Activated B cell treated with CpG ODN at 0.5 μM for 24 hours (primary cell): ENCODE measurements at regions of chr19 and their contacts with region 1.

Region 1: GRCh38 chr19:58400916-58401839 is 5.7 kb downstream of the RNF225 start:
- DNase-seq: peak; percentile 96
- ATAC-seq: peak; percentile 96
- H3K4me3 Mint-ChIP-seq: peak overlapping the region; percentile 92
- H3K27ac Mint-ChIP-seq: peak overlapping the region; percentile 90
- H3K4me1 Mint-ChIP-seq: peaks cover 12% of the 10 kb centered on the region
- H3K27me3 Mint-ChIP-seq: peaks cover 7% of the 10 kb centered on the region
- CTCF ChIP-seq: no peak

Region 2: GRCh38 chr19:57682226-57682766 is 718.9 kb before region 1 on chr19:
- CTCF ChIA-PET with region 1: no interaction called
- POLR2A ChIA-PET with region 1: no interaction called
- intact Hi-C with region 1: loop called (anchors 1 kb)
- DNase-seq: no peak
- ATAC-seq: no peak
- H3K4me3 Mint-ChIP-seq: peak overlapping the region; percentile 98
- H3K27ac Mint-ChIP-seq: peak overlapping the region; percentile 90
- H3K4me1 Mint-ChIP-seq: peaks cover 39% of the 10 kb centered on the region
- H3K27me3 Mint-ChIP-seq: peaks cover 8% of the 10 kb centered on the region
- CTCF ChIP-seq: no peak

Region 3: GRCh38 chr19:58305065-58305931 is 95.9 kb before region 1 on chr19 and contains the start of gene ERVK3-1:
- CTCF ChIA-PET with region 1: no interaction called
- POLR2A ChIA-PET with region 1: no interaction called
- intact Hi-C with region 1: loop called (anchors 1 kb)
- DNase-seq: peak; percentile 89
- ATAC-seq: peak; percentile 97
- H3K4me3 Mint-ChIP-seq: peak within 1 kb of the TSS; percentile 100
- H3K27ac Mint-ChIP-seq: peak within 1 kb of the TSS; percentile 98
- H3K4me1 Mint-ChIP-seq: peaks cover 38% of the 10 kb centered on the region
- H3K27me3 Mint-ChIP-seq: no peaks in the 10 kb centered on the region
- CTCF ChIP-seq: no peak
- total RNA-seq, gene ERVK3-1: 61.4 and 74.3 TPM in 2 replicates

Region 4: DNA sequence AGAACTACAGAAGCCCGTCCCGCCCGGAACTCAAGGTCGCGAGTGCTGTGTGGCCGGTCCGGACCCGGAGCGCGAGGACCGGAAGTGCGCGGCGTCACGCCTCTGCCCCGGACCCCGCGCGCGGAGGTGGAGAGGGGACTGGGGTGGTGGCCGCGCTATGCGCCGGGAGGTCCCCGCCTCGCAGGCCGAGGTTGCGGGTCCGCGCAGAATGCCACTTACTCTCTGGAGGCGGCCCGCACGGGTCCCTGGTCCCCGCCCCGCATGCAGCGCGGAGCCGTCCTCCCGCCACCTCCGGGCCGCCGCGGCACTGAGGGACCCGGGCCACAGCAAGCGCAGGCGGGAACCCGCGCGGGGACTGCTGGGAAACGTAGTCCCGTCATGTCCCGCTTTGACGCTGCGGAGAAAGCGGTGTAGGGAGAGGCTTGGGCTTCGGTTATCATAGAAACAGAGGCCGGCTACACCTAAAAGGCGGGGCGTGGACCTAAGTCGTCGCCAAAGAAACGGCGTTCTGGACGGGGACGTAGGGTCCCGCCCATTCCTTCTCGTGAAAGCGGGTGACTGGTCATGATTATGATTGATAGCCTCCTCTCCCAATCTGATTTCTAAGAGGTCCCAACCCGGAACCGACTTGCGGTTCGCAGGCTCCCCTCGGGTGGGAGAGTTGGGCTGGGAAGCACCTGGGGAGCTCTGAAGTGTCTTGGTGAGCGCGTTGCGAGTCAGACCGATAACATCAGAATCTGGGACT is 20.3 kb before region 1 on chr19 and contains the start of gene ZNF837:
- CTCF ChIA-PET with region 1: no interaction called
- POLR2A ChIA-PET with region 1: interaction called, 10 read pairs
- intact Hi-C with region 1: loop called (anchors 1 kb)
- DNase-seq: peak; percentile 96
- ATAC-seq: peak; percentile 86
- H3K4me3 Mint-ChIP-seq: peak within 1 kb of the TSS; percentile 83
- H3K27ac Mint-ChIP-seq: peak within 1 kb of the TSS; percentile 87
- H3K4me1 Mint-ChIP-seq: peaks cover 37% of the 10 kb centered on the region
- H3K27me3 Mint-ChIP-seq: no peaks in the 10 kb centered on the region
- CTCF ChIP-seq: no peak
- total RNA-seq, gene ZNF837: 3.1 and 3.5 TPM in 2 replicates

Region 5: DNA sequence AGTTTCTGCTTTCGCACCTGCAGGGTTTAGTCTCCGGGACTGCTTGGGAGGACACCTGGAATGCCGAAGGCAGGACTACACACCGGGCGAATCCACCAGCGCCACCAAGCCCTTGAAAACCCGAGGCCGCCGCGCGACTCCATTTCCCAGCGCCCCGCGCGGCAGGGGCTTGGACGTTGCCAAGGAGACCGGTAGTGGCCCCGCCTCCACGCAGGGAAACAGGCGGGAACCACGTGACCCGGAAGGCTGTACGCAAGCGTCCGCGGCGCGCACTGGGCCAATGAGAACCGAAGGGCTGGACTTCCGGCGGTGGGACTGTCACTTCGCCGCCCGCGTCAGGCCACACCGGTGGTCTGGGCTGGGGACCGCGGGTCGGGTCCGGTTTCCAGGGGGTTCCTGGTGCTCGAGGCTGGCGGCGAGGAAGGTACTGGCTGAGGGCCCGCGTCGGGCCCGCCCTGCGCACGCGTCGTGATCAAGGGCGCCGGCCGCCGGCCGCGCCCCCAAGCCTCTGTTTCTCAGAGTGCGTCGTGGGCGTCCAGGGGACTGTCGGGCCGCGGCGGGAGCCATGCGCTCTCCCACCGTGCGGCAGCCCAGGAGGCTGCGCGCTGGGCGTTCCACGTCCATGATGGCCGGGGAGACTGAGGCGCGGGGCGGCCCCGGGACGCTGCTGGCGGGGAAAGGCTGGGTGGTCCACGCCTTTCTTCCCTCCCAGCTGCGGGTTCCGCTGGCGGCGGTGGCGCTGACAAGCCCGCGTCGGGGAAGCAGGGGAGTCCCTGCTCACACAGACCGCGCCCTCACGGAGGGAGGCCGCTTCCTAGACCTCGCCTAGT is 65.8 kb after region 1 on chr19 and contains the start of gene ZNF324:
- CTCF ChIA-PET with region 1: no interaction called
- POLR2A ChIA-PET with region 1: no interaction called
- intact Hi-C with region 1: loop called (anchors 2 kb)
- DNase-seq: peak; percentile 95
- ATAC-seq: peak; percentile 92
- H3K4me3 Mint-ChIP-seq: peak within 1 kb of the TSS; percentile 81
- H3K27ac Mint-ChIP-seq: peak within 1 kb of the TSS; percentile 56
- H3K4me1 Mint-ChIP-seq: peaks cover 26% of the 10 kb centered on the region
- H3K27me3 Mint-ChIP-seq: no peaks in the 10 kb centered on the region
- CTCF ChIP-seq: no peak
- total RNA-seq, gene ZNF324: 11.8 and 13.1 TPM in 2 replicates

Region 6: GRCh38 chr19:58499021-58499927 is 98.1 kb after region 1 on chr19:
- CTCF ChIA-PET with region 1: no interaction called
- POLR2A ChIA-PET with region 1: no interaction called
- intact Hi-C with region 1: loop called (anchors 1 kb)
- DNase-seq: peak; percentile 89
- ATAC-seq: peak; percentile 92
- H3K4me3 Mint-ChIP-seq: peak overlapping the region; percentile 92
- H3K27ac Mint-ChIP-seq: peak overlapping the region; percentile 90
- H3K4me1 Mint-ChIP-seq: peaks cover 24% of the 10 kb centered on the region
- H3K27me3 Mint-ChIP-seq: no peaks in the 10 kb centered on the region
- CTCF ChIP-seq: no peak

Region 7: GRCh38 chr19:58558623-58559274 is 157.6 kb after region 1 on chr19:
- CTCF ChIA-PET with region 1: no interaction called
- POLR2A ChIA-PET with region 1: no interaction called
- intact Hi-C with region 1: loop called (anchors 1 kb)
- DNase-seq: peak; percentile 97
- ATAC-seq: peak; percentile 72
- H3K4me3 Mint-ChIP-seq: peak overlapping the region; percentile 97
- H3K27ac Mint-ChIP-seq: peak overlapping the region; percentile 97
- H3K4me1 Mint-ChIP-seq: peaks cover 82% of the 10 kb centered on the region
- H3K27me3 Mint-ChIP-seq: no peaks in the 10 kb centered on the region
- CTCF ChIP-seq: no peak

Region 8: DNA sequence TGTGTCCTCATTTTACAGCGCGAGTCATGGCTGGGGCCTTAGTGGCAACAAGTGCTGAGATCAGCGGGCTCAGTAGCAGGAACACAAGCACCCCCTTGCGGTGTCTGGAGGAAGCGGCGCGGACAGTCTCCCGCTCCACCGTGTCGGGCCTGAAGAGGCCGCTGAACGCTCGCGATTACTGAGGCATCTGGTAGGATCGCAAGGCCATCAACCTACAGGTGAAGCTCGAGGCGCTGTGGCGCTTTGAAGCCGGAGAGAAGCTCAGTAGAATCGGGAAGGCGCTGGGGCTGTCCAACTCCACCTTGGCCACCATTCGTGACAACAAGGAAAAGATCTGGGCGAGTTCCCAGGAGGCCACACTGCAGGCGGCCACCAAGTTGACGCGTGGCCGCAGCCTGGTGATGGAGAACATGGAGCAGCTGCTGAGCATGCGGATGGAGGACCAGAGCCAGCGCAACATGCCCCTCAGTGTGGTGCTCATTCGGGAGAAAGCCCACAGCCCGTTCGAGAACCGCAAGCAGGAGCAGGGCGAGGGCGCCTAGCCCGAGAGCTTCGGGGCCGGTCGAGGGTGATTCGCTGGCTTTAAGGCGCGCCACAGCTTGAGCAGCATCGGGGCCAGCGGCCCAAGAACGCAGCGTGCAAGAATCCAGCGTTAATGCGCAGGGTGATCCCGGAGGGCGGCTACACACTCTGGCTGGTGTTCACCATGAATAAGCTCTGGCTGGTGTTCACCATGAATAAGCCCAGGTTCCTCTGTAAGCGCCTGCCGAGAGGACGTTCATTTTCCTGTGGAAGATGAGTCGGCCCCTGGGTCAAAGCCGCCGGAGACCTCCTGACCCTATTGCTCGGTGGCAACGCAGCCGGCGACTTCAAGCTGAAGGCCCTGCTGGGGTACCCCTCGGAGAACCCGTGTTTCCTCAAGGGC is 180.3 kb after region 1 on chr19:
- CTCF ChIA-PET with region 1: no interaction called
- POLR2A ChIA-PET with region 1: no interaction called
- intact Hi-C with region 1: no loop called
- DNase-seq: peak; percentile 73
- ATAC-seq: peak; percentile 99
- H3K4me3 Mint-ChIP-seq: no peak overlapping the region
- H3K27ac Mint-ChIP-seq: peak overlapping the region; percentile 41
- H3K4me1 Mint-ChIP-seq: peaks cover 23% of the 10 kb centered on the region
- H3K27me3 Mint-ChIP-seq: no peaks in the 10 kb centered on the region
- CTCF ChIP-seq: no peak